ENCODE measurements at regions of chr3 and their contacts with region 1.

Region 1: GRCh38 chr3:8769088-8769822 is at the start of gene OXTR:
- DNase-seq: peak; percentile 82
- ATAC-seq: peak; percentile 100
- H3K4me3 ChIP-seq: peak within 1 kb of the TSS; percentile 82
- H3K27ac ChIP-seq: no peak within 1 kb of the TSS
- H3K4me1 ChIP-seq: peaks cover 6% of the 10 kb centered on the region; the same call in 1 of the 2 replicates
- H3K27me3 ChIP-seq: peaks cover 21% of the 10 kb centered on the region; the same call in 1 of the 2 replicates
- CTCF ChIP-seq: peak; percentile 99
- POLR2A ChIP-seq: no peak
- RAD21 ChIP-seq: peak; percentile 96
- total RNA-seq, gene OXTR: 56.1 and 76.9 TPM in 2 replicates

Region 2: DNA sequence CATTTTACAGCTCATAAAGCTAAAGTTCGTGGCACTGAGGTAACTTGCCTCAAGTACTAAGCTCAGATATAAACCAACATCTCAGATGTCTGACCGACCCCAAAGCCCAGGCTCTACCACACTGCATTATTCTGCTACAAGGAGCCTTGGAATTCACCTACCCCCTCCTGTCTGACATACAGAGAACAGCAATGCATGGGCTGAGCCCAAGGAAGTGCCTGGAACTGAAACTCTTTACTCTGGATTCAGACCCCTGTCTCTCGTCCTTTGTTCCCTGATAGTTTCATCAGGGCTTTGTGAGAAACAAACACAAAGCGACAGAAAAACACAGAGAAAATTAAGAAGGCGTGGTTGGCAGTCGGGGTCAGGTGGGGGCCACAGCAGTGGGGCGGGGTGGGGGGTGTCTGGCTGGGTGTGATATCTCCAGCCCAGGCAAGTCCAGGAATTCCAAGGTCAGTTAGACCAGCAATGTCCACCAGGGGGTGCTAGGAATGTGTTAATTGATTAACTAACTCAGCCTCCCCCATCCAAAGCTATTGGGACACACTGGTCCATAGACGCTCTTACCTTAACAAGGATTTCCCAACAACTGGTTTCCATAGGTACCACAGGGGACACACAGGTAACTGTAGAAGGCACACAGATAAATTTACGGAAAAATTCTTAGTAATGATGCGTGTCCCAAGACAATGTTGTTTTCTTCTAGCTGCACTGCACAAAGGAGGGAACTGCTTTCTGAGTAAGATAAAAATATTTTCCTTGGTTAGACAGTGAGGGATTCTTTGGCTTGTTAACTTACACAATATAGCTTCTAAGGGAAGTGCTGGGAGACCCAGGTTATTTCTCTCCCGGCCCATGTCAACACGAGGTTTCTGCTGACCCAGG is 105.8 kb before region 1 on chr3:
- CTCF ChIA-PET with region 1: interaction called, 9 read pairs
- POLR2A ChIA-PET with region 1: no interaction called
- dilution Hi-C with region 1: no loop called
- in situ Hi-C with region 1: no loop called
- intact Hi-C with region 1: loop called (anchors 5 kb)
- DNase-seq: peak; percentile 61
- ATAC-seq: peak; percentile 67
- H3K4me3 ChIP-seq: no peak overlapping the region
- H3K27ac ChIP-seq: no peak overlapping the region
- H3K4me1 ChIP-seq: peaks cover 8% of the 10 kb centered on the region
- H3K27me3 ChIP-seq: no peaks in the 10 kb centered on the region; the same call in 1 of the 2 replicates
- CTCF ChIP-seq: peak; percentile 58
- POLR2A ChIP-seq: no peak
- RAD21 ChIP-seq: peak; percentile 55

Region 3: DNA sequence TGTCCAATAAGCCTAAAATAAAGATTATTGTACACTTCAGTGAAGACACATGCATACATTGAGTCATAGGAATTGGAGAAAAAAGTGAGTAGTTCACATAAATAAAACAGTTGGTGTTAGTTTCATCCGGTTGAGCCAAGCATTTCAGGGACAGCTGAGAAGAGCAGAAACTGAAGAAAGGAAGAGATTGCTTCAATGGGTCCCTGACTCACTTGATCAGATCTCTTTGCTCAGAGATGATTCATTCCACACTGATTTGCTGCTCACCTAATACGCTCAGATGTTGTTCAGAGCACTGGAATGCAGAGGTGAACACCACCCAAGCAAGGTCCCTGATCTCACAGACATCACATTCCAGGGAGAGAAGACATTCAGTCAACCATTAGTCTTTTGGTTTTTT is 100.4 kb after region 1 on chr3:
- CTCF ChIA-PET with region 1: interaction called, 6 read pairs
- POLR2A ChIA-PET with region 1: no interaction called
- dilution Hi-C with region 1: no loop called
- in situ Hi-C with region 1: no loop called
- intact Hi-C with region 1: loop called (anchors 1 kb)
- DNase-seq: peak; percentile 99
- ATAC-seq: peak; percentile 91
- H3K4me3 ChIP-seq: no peak overlapping the region
- H3K27ac ChIP-seq: peak overlapping the region; percentile 80
- H3K4me1 ChIP-seq: peaks cover 18% of the 10 kb centered on the region
- H3K27me3 ChIP-seq: no peaks in the 10 kb centered on the region
- CTCF ChIP-seq: no peak
- POLR2A ChIP-seq: no peak
- RAD21 ChIP-seq: 0 out of 2 replicates have a peak, but pooled peaks have one; percentile 5

Region 4: DNA sequence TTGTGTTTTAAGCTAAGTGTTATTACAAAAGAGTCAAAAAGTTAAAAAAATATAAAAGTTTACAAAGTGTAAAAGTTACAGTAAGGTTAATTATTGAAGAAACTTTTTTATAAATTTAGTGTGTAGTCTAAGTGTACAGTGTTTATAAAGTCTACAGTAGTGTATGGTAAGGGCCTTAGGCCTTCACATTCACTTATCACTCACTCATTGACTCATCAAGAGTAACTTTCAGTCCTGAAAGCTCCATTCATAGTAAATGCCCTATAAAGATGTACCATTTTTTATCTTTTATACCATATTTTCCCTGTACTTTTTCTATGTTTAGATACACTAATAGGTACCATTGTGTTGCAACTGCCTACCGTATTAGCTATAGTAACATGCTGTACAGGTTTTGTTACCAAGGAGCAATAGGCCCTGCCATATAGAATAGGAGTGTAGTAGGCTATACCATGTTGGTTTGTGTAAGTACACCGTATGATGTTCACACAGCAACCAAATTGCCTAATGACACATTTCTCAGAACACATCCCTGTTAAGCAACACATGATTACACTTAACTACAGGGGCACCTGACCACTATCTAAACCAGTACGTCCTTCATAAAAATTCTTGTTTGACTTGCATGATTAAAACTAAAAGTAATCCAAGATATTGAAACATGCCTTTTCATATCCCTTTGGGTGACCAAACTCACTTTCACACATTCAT is 176.8 kb after region 1 on chr3:
- CTCF ChIA-PET with region 1: interaction called, 15 read pairs
- POLR2A ChIA-PET with region 1: no interaction called
- dilution Hi-C with region 1: no loop called
- in situ Hi-C with region 1: no loop called
- intact Hi-C with region 1: no loop called
- DNase-seq: no peak
- ATAC-seq: no peak
- H3K4me3 ChIP-seq: no peak overlapping the region
- H3K27ac ChIP-seq: no peak overlapping the region
- H3K4me1 ChIP-seq: peaks cover 3% of the 10 kb centered on the region; the same call in 1 of the 2 replicates
- H3K27me3 ChIP-seq: no peaks in the 10 kb centered on the region
- CTCF ChIP-seq: no peak
- POLR2A ChIP-seq: no peak
- RAD21 ChIP-seq: no peak

Region 5: GRCh38 chr3:8970971-8971589 is 201.8 kb after region 1 on chr3:
- CTCF ChIA-PET with region 1: interaction called, 4 read pairs
- POLR2A ChIA-PET with region 1: no interaction called
- dilution Hi-C with region 1: no loop called
- in situ Hi-C with region 1: loop called (anchors 10 kb)
- intact Hi-C with region 1: loop called (anchors 1 kb)
- DNase-seq: peak; percentile 63
- ATAC-seq: peak; percentile 94
- H3K4me3 ChIP-seq: no peak overlapping the region
- H3K27ac ChIP-seq: no peak overlapping the region
- H3K4me1 ChIP-seq: no peaks in the 10 kb centered on the region
- H3K27me3 ChIP-seq: peaks cover 2% of the 10 kb centered on the region; the same call in 1 of the 2 replicates
- CTCF ChIP-seq: peak; percentile 97
- POLR2A ChIP-seq: no peak
- RAD21 ChIP-seq: peak; percentile 97